ENCODE measurements at regions of chr6 and their contacts with region 1.

Region 1: DNA sequence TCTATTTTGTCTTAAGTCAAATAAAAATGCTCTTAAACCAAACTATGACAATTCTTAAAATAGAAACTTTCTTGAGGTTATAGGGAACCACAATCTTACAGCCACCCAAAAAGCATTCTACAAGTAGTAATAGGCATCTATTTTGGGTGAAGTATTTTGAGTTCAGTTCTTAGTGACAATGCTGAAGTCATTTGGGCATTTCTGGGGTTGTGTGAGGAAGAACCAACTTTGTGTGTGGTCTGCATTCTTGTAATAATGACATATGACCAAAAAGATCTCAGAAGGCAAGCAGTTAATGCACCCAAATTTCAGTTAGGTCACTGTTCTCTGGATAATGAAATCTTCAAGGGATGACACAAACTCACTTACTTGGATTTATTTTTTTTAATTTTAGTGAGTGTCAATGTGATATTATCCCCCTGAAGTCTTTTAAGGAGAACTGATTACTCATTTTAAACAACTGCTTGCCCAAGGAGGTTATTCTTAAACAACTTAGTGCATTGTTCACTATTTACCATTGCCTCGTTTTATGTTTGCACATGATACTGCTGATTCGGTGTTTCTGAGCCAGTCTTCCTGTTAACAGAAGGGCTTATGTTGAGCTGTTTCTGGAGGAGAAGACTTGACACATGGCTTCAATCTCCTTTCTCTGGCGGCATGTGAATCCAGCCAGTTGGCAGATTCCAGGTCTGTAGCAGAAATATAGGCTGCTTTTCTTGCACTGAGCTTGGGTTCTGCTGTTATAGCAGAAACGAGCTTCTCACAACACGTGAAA is 618.9 kb downstream of the BCKDHB start:
- DNase-seq: peak; percentile 39
- ATAC-seq: peak; percentile 88
- H3K4me3 ChIP-seq: no peak overlapping the region
- H3K27ac ChIP-seq: no peak overlapping the region
- H3K4me1 ChIP-seq: peaks cover 8% of the 10 kb centered on the region; the same call in 1 of the 2 replicates
- H3K27me3 ChIP-seq: no peaks in the 10 kb centered on the region
- CTCF ChIP-seq: no peak

Region 2: DNA sequence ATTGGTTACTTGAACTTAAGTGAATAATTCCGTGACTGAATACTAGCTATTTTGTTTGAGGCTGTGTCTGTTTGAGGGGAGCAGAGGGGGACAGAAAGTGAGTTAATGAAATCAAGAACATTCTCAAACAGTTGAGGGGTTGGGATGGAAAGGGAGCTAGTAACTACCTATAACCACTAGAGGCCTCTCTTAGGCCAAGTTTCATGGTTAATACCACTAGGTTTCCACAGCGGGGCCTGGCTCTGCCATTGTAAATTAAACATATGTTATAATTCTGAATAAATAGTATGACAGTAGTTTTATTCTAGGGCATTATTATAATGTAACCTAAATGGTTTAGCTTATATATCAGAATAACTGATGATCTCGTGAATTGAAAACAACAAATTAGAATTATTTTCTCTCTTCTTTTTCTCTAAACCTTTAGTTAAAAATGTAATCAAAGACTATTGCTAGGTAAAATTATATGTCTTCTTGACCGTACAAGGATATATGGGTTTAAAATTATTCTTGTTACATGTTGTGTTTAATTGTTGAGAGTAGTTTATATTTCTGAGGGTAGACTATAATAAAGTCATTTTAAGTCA is 510.8 kb before region 1 on chr6:
- CTCF ChIA-PET with region 1: no interaction called
- POLR2A ChIA-PET with region 1: no interaction called
- intact Hi-C with region 1: loop called (anchors 5 kb)
- DNase-seq: peak; percentile 67
- ATAC-seq: peak; percentile 86
- H3K4me3 ChIP-seq: no peak overlapping the region
- H3K27ac ChIP-seq: no peak overlapping the region
- H3K4me1 ChIP-seq: 0 out of 2 replicates have a peak, but pooled peaks cover 2% of the 10 kb centered on the region
- H3K27me3 ChIP-seq: no peaks in the 10 kb centered on the region
- CTCF ChIP-seq: peak; percentile 70

Region 3: DNA sequence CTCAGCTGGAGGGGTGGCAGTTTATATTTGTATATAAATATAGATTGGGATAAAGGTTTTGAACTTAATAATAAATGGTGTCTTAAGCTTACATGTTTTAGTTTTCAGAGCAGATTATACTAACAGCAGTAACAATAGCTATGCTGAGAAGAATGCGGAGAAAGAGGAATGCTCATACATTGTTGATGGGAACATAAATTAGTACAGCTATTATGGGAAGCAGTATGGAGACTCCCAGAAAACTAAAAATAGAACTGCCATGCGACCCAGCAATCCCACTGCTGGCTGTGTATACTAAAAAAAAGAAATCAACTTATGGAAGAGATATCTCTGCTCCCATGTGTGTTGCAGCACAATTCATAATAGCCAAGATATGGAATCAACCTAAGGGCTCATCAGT is 490.9 kb before region 1 on chr6:
- CTCF ChIA-PET with region 1: no interaction called
- POLR2A ChIA-PET with region 1: no interaction called
- intact Hi-C with region 1: no loop called
- DNase-seq: no peak
- ATAC-seq: no peak
- H3K4me3 ChIP-seq: no peak overlapping the region
- H3K27ac ChIP-seq: no peak overlapping the region
- H3K4me1 ChIP-seq: no peaks in the 10 kb centered on the region
- H3K27me3 ChIP-seq: no peaks in the 10 kb centered on the region
- CTCF ChIP-seq: no peak

Measured in PC-3 (cell line).